K562 (cell line): ENCODE measurements at regions of chrX and their contacts with region 1.

Region 1: DNA sequence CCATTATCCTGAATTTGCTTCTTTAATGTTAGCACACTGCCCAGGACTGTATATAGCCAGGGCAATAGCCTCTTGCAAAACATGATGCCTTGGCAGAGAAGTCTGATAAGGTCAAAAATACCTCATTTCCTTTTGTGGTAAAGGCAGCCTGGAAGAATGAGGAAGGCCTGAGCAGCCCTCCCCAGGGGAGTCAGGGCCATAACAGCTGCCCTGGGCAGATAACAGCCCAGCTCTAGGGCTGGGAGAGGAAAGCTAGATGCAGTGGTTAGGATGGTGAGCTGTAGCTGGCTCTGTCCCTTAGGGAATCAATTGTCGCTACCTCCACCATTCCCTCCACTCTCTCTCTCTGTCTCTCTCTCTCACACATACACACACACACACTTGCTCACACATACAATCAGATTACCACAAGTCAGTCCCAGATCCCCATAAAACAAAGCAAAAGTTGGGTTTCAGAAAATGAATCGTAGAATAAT is 29.2 kb downstream of the EFHC2 start:
- DNase-seq: peak; percentile 89 to 94 (median 90)
- ATAC-seq: peak; percentile 100
- H3K4me3 ChIP-seq: no peak overlapping the region; the same call in 1 of the 2 replicates
- H3K27ac ChIP-seq: peak overlapping the region; percentile 87
- H3K4me1 ChIP-seq: peaks cover 0 to 18% of the 10 kb centered on the region in 2 experiments; a peak in 3 of 5 replicates
- H3K27me3 ChIP-seq: no peaks in the 10 kb centered on the region
- CTCF ChIP-seq: no peak
- EP300 ChIP-seq: peak; percentile 98
- POLR2A ChIP-seq: peak; percentile 51; the same call in 1 of the 2 replicates
- RAD21 ChIP-seq: no peak; a peak in 4 of 4 replicates

Region 2: GRCh38 chrX:44253575-44253942 is 60.7 kb before region 1 on chrX:
- CTCF ChIA-PET with region 1: no interaction called
- POLR2A ChIA-PET with region 1: no interaction called
- in situ Hi-C with region 1: no loop called
- intact Hi-C with region 1: loop called (anchors 5 kb)
- DNase-seq: no peak
- ATAC-seq: peak; percentile 48; the same call in 2 of the 3 replicates
- H3K4me3 ChIP-seq: no peak overlapping the region
- H3K27ac ChIP-seq: peak overlapping the region; percentile 76
- H3K4me1 ChIP-seq: peaks cover 0 to 4% of the 10 kb centered on the region in 2 experiments; a peak in 4 of 5 replicates
- H3K27me3 ChIP-seq: no peaks in the 10 kb centered on the region
- CTCF ChIP-seq: no peak
- EP300 ChIP-seq: no peak
- POLR2A ChIP-seq: no peak
- RAD21 ChIP-seq: no peak

Region 3: DNA sequence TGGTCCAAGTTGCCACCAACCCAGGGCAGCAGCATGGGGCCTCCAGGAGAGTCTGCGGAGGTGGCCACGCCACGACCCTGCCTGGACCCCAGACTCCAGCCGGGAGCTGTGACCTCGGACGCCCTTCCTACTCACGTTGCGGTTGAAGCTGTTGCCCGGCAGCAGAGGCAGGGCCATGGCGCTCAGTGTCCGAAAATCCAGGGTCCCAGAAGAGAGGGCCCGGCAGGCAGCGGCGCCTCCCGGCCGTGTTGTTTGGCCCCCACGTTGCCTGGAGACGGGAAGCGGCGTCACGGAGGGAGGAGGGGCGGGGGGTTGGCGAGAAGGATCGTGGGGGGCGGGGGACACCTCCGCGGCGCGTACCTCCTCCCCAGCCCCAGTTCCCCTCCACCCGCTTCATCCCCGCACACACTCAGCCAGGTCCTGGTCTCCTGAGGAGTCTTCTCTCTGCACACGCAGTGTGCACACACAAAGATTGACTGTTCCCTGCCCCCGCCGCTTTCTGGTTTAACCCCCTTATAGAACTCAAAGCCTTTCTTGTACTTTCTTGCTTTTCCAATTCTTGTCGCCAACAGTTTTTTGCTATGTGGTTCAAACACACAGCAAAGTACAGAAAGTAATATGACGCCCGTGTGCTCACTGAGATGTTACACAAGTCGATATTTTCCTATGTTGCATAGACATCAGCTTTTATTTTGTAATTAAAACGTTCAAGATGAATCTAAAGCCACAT is 29.3 kb after region 1 on chrX and contains the start of gene EFHC2:
- CTCF ChIA-PET with region 1: interaction called, 3 read pairs
- POLR2A ChIA-PET with region 1: no interaction called
- in situ Hi-C with region 1: no loop called
- intact Hi-C with region 1: loop called (anchors 2 kb)
- DNase-seq: peak; percentile 64 to 73 (median 70)
- ATAC-seq: peak; percentile 85
- H3K4me3 ChIP-seq: peak within 1 kb of the TSS; percentile 48
- H3K27ac ChIP-seq: peak within 1 kb of the TSS; percentile 74
- H3K4me1 ChIP-seq: peaks cover 5 to 9% of the 10 kb centered on the region in 2 experiments; a peak in 4 of 5 replicates
- H3K27me3 ChIP-seq: no peaks in the 10 kb centered on the region
- CTCF ChIP-seq: no peak
- EP300 ChIP-seq: no peak
- POLR2A ChIP-seq: no peak
- RAD21 ChIP-seq: no peak
- polyA plus RNA-seq, gene EFHC2: 2.4 to 3.0 TPM